Activated naive CD4-positive, alpha-beta T cell treated with anti-CD3 and anti-CD28 coated beads, Interleukin-2, amount 10 ng/mL, durations not matched to agents 7 days and 5 days (primary cell): ENCODE measurements at regions of chr3 and their contacts with region 1.

Region 1: DNA sequence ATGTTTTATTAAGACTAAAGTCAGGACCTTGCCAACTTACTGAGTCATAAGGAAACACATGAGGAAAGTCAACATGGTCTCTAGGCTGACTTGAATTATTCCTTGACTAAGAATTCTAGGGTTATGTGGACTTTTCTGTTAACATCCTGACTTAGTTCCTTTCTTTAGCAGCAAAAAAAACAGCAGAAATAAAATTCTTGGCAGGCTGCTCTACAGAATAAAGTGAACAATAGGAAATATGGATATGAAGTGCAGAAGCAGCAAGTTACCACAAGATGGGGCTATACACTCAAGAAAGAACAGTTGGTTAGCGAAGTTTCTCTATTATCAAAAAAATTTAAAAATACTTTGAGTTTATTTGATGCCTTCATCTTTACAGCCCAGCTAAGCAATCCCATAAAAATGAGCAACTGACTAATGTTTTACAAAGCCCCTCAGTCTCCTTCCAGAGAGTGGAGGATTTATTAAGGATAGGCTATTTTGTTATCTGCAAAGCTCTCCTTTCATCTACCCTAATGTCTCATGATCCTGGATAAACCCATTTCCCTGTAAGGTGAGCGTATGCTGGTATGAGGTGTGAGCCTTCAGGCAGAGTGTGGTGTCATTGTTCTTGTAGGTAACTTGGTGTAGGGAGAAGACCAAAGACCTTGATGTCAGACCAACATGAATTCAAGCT is 23.1 kb upstream of the MCCC1 start:
- DNase-seq: no peak
- H3K4me3 Mint-ChIP-seq: no peak overlapping the region
- H3K27ac Mint-ChIP-seq: no peak overlapping the region
- H3K4me1 Mint-ChIP-seq: no peaks in the 10 kb centered on the region
- H3K27me3 Mint-ChIP-seq: peaks cover 8% of the 10 kb centered on the region

Region 2: GRCh38 chr3:182713743-182714517 is 408.5 kb before region 1 on chr3:
- CTCF ChIA-PET with region 1: interaction called, 12 read pairs
- DNase-seq: no peak
- H3K4me3 Mint-ChIP-seq: no peak overlapping the region
- H3K27ac Mint-ChIP-seq: no peak overlapping the region
- H3K4me1 Mint-ChIP-seq: peaks cover 13% of the 10 kb centered on the region
- H3K27me3 Mint-ChIP-seq: no peaks in the 10 kb centered on the region

Region 3: DNA sequence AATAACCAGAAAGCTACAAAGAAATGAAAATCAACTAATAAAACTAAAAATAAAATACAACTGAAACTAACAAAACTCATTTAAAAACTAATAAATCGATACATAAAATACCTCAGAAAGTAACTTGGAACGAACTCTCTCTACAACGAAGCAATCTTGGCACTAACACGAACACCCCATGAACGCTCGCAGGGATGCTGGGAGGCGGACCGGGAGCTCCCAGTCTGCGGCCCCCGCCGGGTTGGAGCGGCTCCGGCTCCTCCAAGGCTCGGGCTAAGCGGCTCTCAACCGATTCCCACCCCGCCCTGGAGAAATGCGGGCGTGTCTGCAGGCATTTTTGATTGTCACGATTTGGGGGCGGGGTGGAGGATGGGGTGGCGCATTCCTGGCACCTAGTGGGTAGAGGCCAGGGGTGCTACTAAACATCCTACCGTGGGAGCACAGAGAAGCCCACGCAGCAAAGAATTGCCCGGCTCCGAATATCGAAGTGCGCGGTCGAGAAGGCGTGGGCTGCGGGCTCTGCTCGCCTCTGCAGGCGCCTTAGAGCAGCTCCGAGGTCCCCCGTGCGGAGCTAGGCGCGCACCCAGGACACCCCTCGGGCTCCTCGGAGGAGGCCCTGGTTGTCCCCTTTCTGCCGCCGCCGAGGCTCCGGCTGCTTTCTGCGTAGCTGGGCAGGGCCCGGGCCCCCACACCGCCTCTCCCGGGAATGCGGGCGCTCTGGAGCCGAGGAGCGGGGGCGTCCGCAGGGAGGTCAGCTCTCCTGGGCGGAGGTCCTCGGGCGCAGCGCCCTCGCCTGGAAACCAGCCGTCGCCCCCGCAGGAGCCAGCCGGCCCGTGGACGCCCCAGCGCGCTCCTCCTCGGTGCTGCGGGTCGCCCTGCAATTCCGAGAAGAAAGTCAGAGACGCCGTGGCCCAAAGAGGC is 56.5 kb after region 1 on chr3:
- CTCF ChIA-PET with region 1: interaction called, 32 read pairs
- DNase-seq: peak; percentile 60
- H3K4me3 Mint-ChIP-seq: peak overlapping the region; percentile 67
- H3K27ac Mint-ChIP-seq: no peak overlapping the region
- H3K4me1 Mint-ChIP-seq: peaks cover 21% of the 10 kb centered on the region
- H3K27me3 Mint-ChIP-seq: peaks cover 71% of the 10 kb centered on the region

Region 4: DNA sequence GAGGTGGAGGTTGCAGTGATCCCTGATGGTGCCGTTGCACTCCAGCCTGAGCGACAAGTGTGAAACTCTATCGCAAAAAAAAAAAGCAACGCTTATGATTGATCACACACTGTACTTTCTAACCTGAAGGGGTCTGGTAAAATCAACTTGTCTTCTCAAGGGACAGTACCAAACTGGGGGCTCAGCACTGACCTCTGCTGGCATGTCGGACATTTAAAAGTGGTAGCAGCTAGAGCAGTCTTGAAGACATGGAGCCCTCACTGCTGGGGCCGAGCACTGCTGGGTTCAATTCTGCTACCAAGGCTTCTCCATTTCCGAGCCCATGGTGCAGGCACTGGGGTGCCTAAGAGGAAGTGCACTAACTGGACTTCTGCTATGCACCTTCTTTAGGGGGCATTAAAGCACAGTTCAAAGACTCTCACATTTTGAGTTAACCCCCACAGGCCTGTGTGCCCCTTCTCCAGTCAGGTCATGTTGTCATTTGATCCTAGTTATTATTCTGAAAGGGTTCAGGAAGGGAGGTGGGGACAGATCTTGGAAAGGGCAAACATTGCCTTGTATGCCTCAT is 66.6 kb after region 1 on chr3:
- CTCF ChIA-PET with region 1: interaction called, 32 read pairs
- DNase-seq: peak; percentile 54
- H3K4me3 Mint-ChIP-seq: no peak overlapping the region
- H3K27ac Mint-ChIP-seq: no peak overlapping the region
- H3K4me1 Mint-ChIP-seq: no peaks in the 10 kb centered on the region
- H3K27me3 Mint-ChIP-seq: no peaks in the 10 kb centered on the region

Region 5: GRCh38 chr3:183385698-183386613 is 263.6 kb after region 1 on chr3:
- CTCF ChIA-PET with region 1: interaction called, 101 read pairs
- DNase-seq: peak; percentile 70
- H3K4me3 Mint-ChIP-seq: no peak overlapping the region
- H3K27ac Mint-ChIP-seq: no peak overlapping the region
- H3K4me1 Mint-ChIP-seq: peaks cover 2% of the 10 kb centered on the region
- H3K27me3 Mint-ChIP-seq: peaks cover 8% of the 10 kb centered on the region